ENCODE measurements at regions of chr9 and their contacts with region 1.

Region 1: GRCh38 chr9:92716557-92716956 is 46.6 kb upstream of the IPPK start:
- DNase-seq: no peak

Region 2: DNA sequence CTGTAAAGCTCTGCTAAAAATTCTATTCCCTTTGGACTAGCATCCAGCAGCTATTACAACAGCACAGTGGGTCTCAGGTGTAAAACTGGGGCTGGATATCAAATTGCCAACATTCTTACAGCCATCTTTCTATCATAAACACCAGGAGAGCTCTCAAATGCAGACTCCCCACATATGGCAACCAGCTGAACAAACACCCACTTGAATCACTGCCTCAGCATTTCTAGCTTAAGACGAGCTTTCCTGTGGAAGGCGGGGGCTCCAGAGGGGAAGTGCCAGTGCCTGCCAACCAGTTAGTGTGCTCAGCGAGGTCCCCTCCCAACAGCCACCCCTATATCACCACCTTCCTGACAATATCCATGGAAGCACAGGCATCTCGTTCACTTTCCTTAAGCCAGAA is 108.8 kb before region 1 on chr9:
- intact Hi-C with region 1: no loop called
- DNase-seq: no peak

Region 3: DNA sequence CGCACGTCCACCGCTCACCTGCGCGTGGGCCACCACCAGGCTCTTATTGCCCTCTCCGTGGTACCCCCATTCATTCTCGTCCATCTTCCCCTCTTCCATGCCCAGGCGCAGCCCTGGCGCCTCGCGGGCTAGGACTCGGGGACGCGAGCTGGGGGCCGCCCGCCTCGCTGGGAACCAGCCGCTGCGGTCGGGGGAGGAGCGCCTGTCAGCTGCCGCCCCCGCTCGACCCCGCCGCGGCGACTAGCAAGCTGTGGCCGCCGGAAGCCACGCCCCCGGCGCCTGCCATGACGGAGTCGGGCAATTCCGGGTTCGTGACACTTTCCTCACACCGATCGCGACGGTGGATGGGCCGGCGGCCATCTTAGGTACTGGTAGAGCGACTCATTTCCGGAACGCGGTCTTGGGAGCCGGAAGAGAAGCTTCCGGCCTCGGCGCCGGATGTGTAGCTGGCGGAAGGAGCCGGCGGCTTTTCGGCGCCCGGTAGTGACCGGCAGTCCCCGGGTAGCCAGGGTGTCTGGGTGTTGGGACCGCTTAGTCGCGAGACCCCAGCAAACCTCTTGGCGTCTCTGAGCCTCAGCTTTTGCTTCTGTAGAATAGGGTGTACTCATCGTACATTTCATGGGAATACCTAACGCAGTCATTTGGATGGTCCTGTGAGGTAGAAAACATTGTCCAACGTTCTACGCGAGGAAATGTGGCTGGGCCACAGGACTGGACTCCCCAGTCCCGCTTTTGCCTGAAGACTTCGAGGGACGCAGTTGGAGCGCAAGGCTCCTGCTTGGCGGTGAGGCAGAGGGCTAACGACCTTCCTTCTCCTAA is 46.5 kb before region 1 on chr9 and contains the start of gene IPPK:
- intact Hi-C with region 1: loop called (anchors 5 kb)
- DNase-seq: peak; percentile 99
- total RNA-seq, gene IPPK: 13.1 TPM

Region 4: DNA sequence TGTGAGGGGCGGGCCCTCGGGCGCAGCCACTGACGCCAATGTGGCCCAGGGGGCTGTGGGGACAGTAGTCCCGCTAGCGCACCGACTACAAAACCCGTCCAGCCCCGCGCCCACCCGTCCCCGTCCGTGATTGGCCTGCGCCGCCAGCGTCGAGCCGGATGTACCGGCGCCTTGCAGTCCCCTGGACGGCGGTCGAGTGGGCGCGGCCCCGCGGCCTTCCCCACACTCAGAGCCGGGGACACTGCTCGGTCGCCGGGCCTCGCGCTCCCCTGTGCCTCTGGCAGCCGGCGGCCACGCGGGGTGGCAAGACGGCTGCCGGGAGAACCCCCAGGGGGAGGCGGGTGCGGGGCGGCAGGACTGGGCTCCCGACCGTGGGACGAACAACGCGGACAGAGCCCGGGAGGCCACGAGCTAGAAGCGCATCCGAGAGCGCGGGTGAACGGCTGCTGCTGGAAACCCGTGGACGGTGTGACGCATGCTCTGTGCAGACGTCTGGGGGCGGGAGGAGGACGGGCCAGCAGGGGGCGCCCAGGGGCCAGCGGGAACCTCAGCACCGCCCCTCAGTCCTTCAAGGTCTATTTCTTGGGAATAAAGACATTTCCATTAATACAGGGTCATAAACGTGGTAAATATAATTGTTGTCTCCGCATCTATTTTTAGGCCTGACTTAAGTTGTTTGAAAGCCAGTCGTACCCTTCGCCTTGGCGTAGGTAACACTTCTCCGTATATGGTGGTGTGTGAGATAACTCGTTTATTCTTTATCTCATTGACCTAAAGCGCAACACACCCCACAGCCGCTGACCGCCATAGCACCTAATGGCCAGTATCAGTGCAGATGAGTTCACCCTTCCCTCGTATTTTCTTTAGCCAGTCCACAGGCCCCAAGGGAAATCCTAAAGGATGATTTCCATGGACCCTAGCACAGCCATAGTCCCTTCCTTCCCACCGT is 48.7 kb after region 1 on chr9:
- intact Hi-C with region 1: loop called (anchors 2 kb)
- DNase-seq: peak; percentile 99

Region 5: DNA sequence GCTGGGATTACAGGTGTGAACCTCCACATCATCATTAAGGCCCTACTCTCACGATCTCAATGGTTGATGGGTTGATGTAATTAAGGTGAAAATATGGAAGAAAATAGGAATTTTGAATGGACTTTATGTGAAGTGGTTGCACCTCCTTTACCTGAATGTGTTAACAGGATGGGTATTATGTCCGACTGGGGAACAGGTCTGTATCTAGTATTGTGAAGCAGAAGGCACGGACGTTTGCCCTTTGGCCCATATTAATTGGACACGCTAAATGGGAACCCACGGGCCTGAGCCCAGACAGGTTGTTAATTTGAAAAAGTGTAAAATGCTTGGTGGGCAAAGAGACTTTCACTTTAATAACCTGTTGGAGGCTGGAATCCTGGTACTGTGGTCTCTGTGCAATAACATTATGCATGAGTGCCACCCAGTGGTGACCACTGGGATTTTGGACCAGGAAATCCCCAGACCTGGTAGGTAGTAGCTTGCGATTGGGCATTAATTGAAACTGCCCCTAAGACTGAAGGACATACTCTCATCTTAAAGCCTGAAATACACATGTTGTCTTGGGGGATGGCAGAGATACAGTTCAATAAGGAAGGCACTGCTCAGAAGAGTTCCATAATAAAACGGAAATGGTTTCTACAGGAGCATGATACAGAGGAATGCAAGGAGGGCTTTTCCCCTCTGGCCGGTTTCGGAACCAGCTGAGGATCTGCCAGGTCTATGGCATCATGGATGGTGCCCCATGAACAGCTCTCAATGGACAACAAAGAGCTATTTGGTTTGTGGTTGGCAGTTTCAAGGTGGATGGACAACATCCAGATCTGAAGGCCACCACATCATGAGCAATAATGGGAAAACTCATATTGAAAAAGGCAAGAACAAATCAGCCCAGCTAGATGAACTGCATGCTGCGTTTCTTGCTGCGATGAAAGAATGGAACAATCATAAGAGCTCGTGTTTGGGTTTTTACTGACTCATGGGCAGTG is 74.3 kb after region 1 on chr9:
- intact Hi-C with region 1: loop called (anchors 5 kb)
- DNase-seq: peak; percentile 85

Region 6: GRCh38 chr9:92837191-92837590 is 120.6 kb after region 1 on chr9:
- intact Hi-C with region 1: no loop called
- DNase-seq: no peak